Panc1 (cell line): ENCODE measurements at regions of chr11 and their contacts with region 1.

Region 1: DNA sequence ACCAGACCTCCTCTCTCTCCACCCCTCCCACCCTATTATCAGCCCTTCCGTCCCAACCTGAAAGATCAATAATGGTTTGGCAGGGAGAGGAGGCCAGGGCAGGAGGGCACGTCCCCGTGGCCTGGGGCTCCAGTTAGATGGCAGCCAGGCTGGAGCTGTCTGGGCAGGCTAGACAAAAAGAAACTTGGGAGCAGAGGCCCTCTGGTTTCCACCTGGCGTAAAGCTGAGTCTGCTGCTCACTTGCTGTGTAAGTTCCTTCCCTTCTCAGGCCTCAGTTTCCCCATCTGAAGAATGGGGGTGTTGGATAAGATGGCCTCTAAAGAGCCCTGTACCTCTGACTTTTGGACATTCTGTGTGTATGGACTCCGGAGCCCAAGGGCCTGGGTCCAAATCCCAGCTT is 3.8 kb upstream of the RHOD start:
- DNase-seq: no peak
- ATAC-seq: no peak
- H3K4me3 ChIP-seq: no peak overlapping the region
- H3K27ac ChIP-seq: no peak overlapping the region
- H3K4me1 ChIP-seq: peaks cover 35% of the 10 kb centered on the region
- H3K27me3 ChIP-seq: no peaks in the 10 kb centered on the region
- CTCF ChIP-seq: no peak

Region 2: DNA sequence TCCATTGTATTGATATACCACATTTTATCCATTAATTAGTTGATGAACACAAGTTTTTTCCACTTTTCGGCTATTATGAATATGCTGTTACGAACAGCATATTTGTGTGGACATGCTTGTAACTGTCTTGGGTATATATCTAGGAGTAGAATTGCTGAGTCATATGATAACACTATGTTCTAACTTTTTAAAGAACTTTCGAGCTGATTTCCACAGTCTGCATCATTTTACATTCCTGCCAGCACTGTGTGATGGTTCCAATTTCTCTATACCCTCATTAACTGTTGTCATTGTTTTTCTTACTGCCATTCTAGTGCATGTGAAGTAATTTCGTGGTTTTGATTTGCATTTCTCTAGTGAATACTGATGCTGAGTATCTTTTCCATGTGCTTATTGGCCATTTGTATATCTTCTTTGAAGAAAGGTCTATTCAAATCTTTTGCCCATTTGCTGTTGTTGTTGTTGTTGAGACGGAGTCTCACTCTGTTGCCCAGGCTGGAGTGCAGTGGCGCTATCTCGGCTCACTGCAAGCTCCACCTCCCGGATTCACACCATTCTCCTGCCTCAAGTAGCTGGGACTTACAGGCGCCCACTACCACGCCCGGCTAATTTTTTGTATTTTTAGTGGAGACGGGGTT is 217.0 kb before region 1 on chr11:
- CTCF ChIA-PET with region 1: no interaction called
- POLR2A ChIA-PET with region 1: interaction called, 13 read pairs
- in situ Hi-C with region 1: no loop called
- intact Hi-C with region 1: no loop called
- DNase-seq: no peak
- ATAC-seq: no peak
- H3K4me3 ChIP-seq: no peak overlapping the region
- H3K27ac ChIP-seq: no peak overlapping the region
- H3K4me1 ChIP-seq: 0 out of 2 replicates have a peak, but pooled peaks cover 4% of the 10 kb centered on the region
- H3K27me3 ChIP-seq: no peaks in the 10 kb centered on the region
- CTCF ChIP-seq: no peak

Region 3: DNA sequence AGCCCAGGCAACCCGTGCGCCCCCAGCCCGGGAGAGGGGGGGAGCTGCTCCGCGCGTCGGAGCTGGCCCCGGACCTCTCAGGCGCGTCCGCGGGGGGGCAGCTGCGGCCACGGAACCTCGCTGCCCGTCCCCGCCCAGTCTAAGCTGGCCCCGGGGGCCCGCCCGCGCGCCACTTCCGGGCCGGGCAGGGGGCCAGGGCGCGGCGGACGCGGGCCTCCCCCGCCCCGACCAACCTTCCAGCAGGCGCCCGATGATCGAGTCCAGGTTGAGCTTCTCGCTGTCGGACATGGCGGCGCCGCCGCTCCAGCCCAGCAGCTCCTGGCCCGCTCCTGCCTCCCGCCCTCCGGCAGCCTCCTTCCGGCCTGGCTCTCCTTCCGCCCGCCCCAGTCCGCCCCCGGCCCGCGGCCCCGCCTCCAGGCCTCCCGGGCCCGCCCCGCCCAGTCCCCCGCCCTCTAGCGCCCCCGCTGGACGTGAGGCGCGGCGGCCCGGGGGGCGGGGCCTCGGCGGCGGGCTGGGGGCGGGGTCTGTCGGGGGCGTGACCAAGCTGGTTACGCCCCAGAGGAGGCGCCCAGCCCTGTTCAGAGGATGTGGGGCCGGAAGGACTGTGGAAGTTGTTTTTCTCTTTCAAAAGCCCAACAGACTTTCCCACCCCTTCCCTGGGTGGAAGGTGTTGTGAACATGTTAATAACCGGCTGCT is 348.8 kb after region 1 on chr11 and contains the start of gene PPP1CA:
- CTCF ChIA-PET with region 1: no interaction called
- POLR2A ChIA-PET with region 1: no interaction called
- in situ Hi-C with region 1: no loop called
- intact Hi-C with region 1: no loop called
- DNase-seq: peak; percentile 8
- ATAC-seq: peak; percentile 92
- H3K4me3 ChIP-seq: peak within 1 kb of the TSS; percentile 84 to 96
- H3K27ac ChIP-seq: peak within 1 kb of the TSS; percentile 98
- H3K4me1 ChIP-seq: peaks cover 36% of the 10 kb centered on the region
- H3K27me3 ChIP-seq: no peaks in the 10 kb centered on the region
- CTCF ChIP-seq: peak; percentile 98
- total RNA-seq, gene PPP1CA: 361 TPM